Activated B cell treated with CpG ODN at 0.5 μM for 24 hours (primary cell): ENCODE measurements at regions of chr11 and their contacts with region 1.

Region 1: GRCh38 chr11:118838905-118839553 is 44.7 kb upstream of the CXCR5 start:
- DNase-seq: no peak
- ATAC-seq: peak; percentile 78
- H3K4me3 Mint-ChIP-seq: peak overlapping the region; percentile 47
- H3K27ac Mint-ChIP-seq: peak overlapping the region; percentile 85
- H3K4me1 Mint-ChIP-seq: peaks cover 61% of the 10 kb centered on the region
- H3K27me3 Mint-ChIP-seq: no peaks in the 10 kb centered on the region
- CTCF ChIP-seq: no peak

Region 2: GRCh38 chr11:118715245-118715831 is 123.7 kb before region 1 on chr11:
- CTCF ChIA-PET with region 1: no interaction called
- POLR2A ChIA-PET with region 1: no interaction called
- intact Hi-C with region 1: no loop called
- DNase-seq: no peak
- ATAC-seq: peak; percentile 21
- H3K4me3 Mint-ChIP-seq: no peak overlapping the region
- H3K27ac Mint-ChIP-seq: peak overlapping the region; percentile 4
- H3K4me1 Mint-ChIP-seq: peaks cover 11% of the 10 kb centered on the region
- H3K27me3 Mint-ChIP-seq: no peaks in the 10 kb centered on the region
- CTCF ChIP-seq: no peak

Region 3: DNA sequence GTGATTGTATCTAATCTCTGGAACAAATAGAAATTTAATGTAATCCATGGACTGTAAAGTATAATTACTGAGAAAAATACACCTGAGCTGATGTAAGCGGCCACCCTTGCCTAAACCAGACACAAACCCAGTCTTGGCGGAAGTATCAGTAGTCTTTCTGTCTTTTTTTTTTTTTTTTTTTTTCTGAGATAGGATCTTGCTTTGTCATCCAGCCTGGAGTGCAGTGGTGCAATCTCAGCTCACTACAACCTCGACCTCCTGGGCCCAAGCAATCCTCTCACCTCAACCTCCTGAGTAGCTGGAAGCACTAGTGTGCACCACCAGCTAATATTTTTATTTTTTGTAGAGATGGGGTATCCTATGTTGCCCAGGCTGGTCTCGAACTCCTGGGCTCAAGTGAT is 39.1 kb after region 1 on chr11:
- CTCF ChIA-PET with region 1: interaction called, 10 read pairs
- POLR2A ChIA-PET with region 1: interaction called, 17 read pairs
- intact Hi-C with region 1: loop called (anchors 1 kb)
- DNase-seq: no peak
- ATAC-seq: no peak
- H3K4me3 Mint-ChIP-seq: no peak overlapping the region
- H3K27ac Mint-ChIP-seq: peak overlapping the region; percentile 89
- H3K4me1 Mint-ChIP-seq: peaks cover 89% of the 10 kb centered on the region
- H3K27me3 Mint-ChIP-seq: no peaks in the 10 kb centered on the region
- CTCF ChIP-seq: no peak